HepG2 (cell line): ENCODE measurements at regions of chr13 and their contacts with region 1.

Region 1: DNA sequence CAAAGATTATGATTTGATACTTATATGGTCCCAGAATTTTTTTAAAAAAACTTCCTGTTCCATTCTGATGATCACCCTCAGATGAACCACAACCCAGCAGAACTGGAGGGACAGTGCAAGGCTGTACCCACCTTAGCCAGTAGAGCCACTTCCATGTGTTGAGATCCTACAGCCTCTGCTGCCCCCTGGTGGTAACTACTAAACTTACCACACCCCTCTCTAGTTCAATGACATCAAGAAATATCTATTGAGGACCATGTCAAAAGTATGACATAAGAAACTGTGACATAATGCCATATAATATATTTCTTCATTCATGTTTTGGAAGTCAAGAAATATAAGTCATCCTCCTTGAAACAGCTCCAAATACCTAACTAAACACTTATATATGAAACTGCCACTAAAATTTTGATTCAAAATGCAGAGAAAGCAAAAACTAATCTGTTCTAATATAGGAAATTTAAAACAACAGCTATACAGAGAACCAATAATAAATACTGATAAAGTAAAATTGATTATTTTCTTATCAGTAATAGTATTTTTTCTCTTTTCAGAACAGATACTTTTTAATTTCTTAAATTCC is 412.6 kb downstream of the KCTD12 start:
- DNase-seq: peak; percentile 76
- ATAC-seq: peak; percentile 100
- H3K4me3 ChIP-seq: no peak overlapping the region
- H3K27ac ChIP-seq: no peak overlapping the region
- H3K4me1 ChIP-seq: no peaks in the 10 kb centered on the region
- H3K27me3 ChIP-seq: 0 out of 5 replicates have a peak, but pooled peaks cover 0 to 3% of the 10 kb centered on the region in 2 experiments
- CTCF ChIP-seq: peak; percentile 85
- EP300 ChIP-seq: no peak
- POLR2A ChIP-seq: no peak
- RAD21 ChIP-seq: peak; percentile 80

Region 2: GRCh38 chr13:74978596-74978995 is 1495.0 kb before region 1 on chr13:
- CTCF ChIA-PET with region 1: no interaction called
- POLR2A ChIA-PET with region 1: no interaction called
- in situ Hi-C with region 1: no loop called
- intact Hi-C with region 1: no loop called
- DNase-seq: no peak
- ATAC-seq: no peak
- H3K4me3 ChIP-seq: no peak overlapping the region
- H3K27ac ChIP-seq: no peak overlapping the region
- H3K4me1 ChIP-seq: no peaks in the 10 kb centered on the region
- H3K27me3 ChIP-seq: no peaks in the 10 kb centered on the region
- CTCF ChIP-seq: no peak
- EP300 ChIP-seq: no peak
- POLR2A ChIP-seq: no peak
- RAD21 ChIP-seq: no peak

Region 3: GRCh38 chr13:75687150-75687763 is 786.4 kb before region 1 on chr13:
- CTCF ChIA-PET with region 1: interaction called, 5 read pairs
- POLR2A ChIA-PET with region 1: no interaction called
- in situ Hi-C with region 1: loop called (anchors 10 kb)
- intact Hi-C with region 1: loop called (anchors 5 kb)
- DNase-seq: peak; percentile 46
- ATAC-seq: peak; percentile 89
- H3K4me3 ChIP-seq: no peak overlapping the region
- H3K27ac ChIP-seq: no peak overlapping the region
- H3K4me1 ChIP-seq: peaks cover 19% of the 10 kb centered on the region
- H3K27me3 ChIP-seq: no peaks in the 10 kb centered on the region
- CTCF ChIP-seq: peak; percentile 61
- EP300 ChIP-seq: no peak
- POLR2A ChIP-seq: no peak
- RAD21 ChIP-seq: 0 out of 2 replicates have a peak, but pooled peaks have one; percentile 20

Region 4: DNA sequence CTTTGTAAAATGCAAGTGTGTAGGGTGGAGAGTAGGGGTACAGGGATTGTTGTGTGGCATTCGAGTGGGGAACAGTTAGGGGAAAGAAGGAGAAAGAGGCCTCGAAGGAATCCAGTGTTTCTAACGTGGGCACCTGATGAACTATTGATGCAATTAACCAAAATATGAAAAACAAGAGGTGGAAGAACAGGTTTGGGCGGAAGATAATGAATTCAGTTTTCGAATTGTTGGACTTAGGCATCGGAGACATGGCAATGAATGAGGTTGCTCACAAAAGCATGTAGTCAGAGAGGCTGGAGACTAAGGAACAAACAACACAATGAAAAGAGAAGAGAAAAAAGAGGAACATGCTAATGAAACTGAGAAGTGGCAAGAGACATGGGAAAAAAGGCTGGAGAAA is 644.8 kb before region 1 on chr13:
- CTCF ChIA-PET with region 1: no interaction called
- POLR2A ChIA-PET with region 1: no interaction called
- in situ Hi-C with region 1: no loop called
- intact Hi-C with region 1: loop called (anchors 5 kb)
- DNase-seq: no peak
- ATAC-seq: no peak
- H3K4me3 ChIP-seq: no peak overlapping the region
- H3K27ac ChIP-seq: no peak overlapping the region
- H3K4me1 ChIP-seq: no peaks in the 10 kb centered on the region
- H3K27me3 ChIP-seq: no peaks in the 10 kb centered on the region
- CTCF ChIP-seq: no peak
- EP300 ChIP-seq: no peak
- POLR2A ChIP-seq: no peak
- RAD21 ChIP-seq: no peak

Region 5: DNA sequence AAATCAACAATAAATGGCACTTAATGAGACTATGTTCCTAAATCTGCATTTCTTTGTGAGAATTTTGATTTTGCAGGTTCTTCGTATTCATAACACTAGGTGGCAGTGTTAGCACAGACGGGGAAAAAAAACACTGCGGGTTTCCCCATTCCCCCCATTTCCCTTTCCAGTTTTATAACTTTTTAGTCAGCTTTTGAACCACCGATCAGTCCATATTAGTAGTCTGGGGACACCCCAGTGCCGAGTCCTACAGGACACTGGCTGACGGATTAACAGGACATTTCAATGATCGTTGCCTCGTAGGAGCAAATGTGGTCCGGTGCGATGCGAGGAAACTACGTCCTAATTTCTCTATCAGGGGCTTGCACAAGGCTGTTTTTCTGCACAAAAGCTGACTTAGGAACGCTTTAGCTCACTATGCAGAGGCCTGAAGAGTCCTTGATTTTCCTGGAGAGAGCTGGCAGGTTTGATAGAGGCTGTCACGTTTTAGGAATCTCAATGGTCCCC is 603.2 kb before region 1 on chr13:
- CTCF ChIA-PET with region 1: interaction called, 25 read pairs
- POLR2A ChIA-PET with region 1: no interaction called
- in situ Hi-C with region 1: loop called (anchors 5 kb)
- intact Hi-C with region 1: loop called (anchors 1 kb)
- DNase-seq: no peak
- ATAC-seq: peak; percentile 37
- H3K4me3 ChIP-seq: peak overlapping the region; percentile 46 to 67 (median 66)
- H3K27ac ChIP-seq: no peak overlapping the region
- H3K4me1 ChIP-seq: no peaks in the 10 kb centered on the region
- H3K27me3 ChIP-seq: peaks cover 0 to 15% of the 10 kb centered on the region in 2 experiments; a peak in 1 of 5 replicates
- CTCF ChIP-seq: peak; percentile 64
- EP300 ChIP-seq: no peak
- POLR2A ChIP-seq: no peak
- RAD21 ChIP-seq: peak; percentile 41; the same call in 1 of the 2 replicates

Region 6: DNA sequence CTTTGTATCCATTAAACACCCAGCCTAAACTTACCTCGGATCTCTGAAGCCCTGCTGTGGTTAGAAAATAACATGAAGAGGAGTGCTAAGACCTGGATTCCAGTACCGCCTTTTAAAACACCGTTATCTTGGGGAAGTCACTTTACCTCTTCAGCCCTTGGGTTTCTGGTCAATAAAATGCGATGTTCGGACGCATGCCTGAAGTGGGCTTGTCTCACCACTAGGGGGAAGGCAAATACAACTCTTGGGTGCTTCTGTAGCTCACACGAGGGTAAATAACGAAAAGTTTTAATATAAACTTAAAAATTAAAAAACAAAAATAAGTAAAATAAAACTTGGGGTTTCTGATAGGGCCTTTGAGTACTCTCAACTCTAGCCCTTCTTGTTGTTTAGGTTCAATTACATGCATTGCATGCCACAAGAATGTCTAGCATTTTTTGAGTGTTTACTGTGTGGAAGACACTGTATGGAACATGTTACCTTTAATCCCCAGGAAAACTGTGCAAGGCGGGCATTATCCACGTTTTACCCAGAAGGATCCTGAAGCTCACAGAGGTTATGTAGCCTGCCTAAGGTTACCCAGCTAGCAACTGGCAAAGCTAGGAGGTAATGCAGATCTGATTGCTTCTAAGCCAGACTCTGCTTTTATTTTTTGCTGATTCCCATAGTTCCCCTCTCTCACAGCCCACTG is 597.1 kb before region 1 on chr13:
- CTCF ChIA-PET with region 1: interaction called, 25 read pairs
- POLR2A ChIA-PET with region 1: no interaction called
- in situ Hi-C with region 1: loop called (anchors 5 kb)
- intact Hi-C with region 1: loop called (anchors 1 kb)
- DNase-seq: peak; percentile 46
- ATAC-seq: peak; percentile 97
- H3K4me3 ChIP-seq: no peak overlapping the region
- H3K27ac ChIP-seq: no peak overlapping the region
- H3K4me1 ChIP-seq: no peaks in the 10 kb centered on the region
- H3K27me3 ChIP-seq: peaks cover 0 to 10% of the 10 kb centered on the region in 2 experiments; a peak in 2 of 5 replicates
- CTCF ChIP-seq: peak; percentile 78
- EP300 ChIP-seq: no peak
- POLR2A ChIP-seq: no peak
- RAD21 ChIP-seq: peak; percentile 46

Region 7: GRCh38 chr13:76016799-76017400 is 456.7 kb before region 1 on chr13:
- CTCF ChIA-PET with region 1: no interaction called
- POLR2A ChIA-PET with region 1: no interaction called
- in situ Hi-C with region 1: no loop called
- intact Hi-C with region 1: loop called (anchors 2 kb)
- DNase-seq: peak; percentile 25
- ATAC-seq: peak; percentile 53
- H3K4me3 ChIP-seq: no peak overlapping the region
- H3K27ac ChIP-seq: no peak overlapping the region
- H3K4me1 ChIP-seq: 0 out of 2 replicates have a peak, but pooled peaks cover 6% of the 10 kb centered on the region
- H3K27me3 ChIP-seq: no peaks in the 10 kb centered on the region
- CTCF ChIP-seq: 0 out of 2 replicates have a peak, but pooled peaks have one; percentile 27
- EP300 ChIP-seq: no peak
- POLR2A ChIP-seq: no peak
- RAD21 ChIP-seq: no peak

Region 8: DNA sequence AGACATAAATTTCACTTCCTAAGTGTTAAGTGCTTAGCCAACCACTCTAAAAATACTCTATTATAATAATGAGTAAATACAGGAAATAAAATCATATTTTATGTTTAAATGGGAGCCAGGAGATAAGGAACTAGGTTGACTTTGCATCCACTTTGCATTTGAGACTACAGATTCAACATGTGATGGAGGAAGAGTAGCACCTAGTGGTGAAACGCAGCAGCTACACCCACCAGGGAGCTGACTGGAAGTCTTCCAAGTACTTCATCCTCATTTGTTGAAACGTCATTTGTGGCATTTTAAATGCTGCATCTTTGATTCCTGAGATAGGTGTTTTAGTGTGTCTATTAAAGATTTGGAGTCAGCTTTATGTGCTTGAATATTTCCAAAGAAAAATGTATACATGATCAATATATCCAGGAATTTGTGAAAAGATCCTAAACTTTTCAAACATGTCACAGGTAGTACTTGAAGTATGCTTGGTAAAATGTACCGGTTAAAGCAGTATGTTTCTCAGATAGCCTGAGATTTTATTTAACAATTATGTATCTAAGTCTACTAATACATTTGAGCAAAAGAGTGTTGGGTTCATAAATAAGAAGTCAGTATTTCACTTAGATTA is 430.0 kb after region 1 on chr13:
- CTCF ChIA-PET with region 1: interaction called, 3 read pairs
- POLR2A ChIA-PET with region 1: no interaction called
- in situ Hi-C with region 1: no loop called
- intact Hi-C with region 1: loop called (anchors 1 kb)
- DNase-seq: peak; percentile 49
- ATAC-seq: peak; percentile 87
- H3K4me3 ChIP-seq: no peak overlapping the region
- H3K27ac ChIP-seq: no peak overlapping the region
- H3K4me1 ChIP-seq: no peaks in the 10 kb centered on the region
- H3K27me3 ChIP-seq: no peaks in the 10 kb centered on the region; a peak in 3 of 5 replicates
- CTCF ChIP-seq: peak; percentile 87
- EP300 ChIP-seq: no peak
- POLR2A ChIP-seq: no peak
- RAD21 ChIP-seq: peak; percentile 68